Activated CD4-positive, alpha-beta T cell treated with anti-CD3 and anti-CD28 coated beads for 36 hours (primary cell): ENCODE measurements at regions of chr1 and their contacts with region 1.

Region 1: GRCh38 chr1:3618881-3619671 is 5.7 kb upstream of the TPRG1L start:
- DNase-seq: peak; percentile 85
- ATAC-seq: peak; percentile 92
- H3K4me3 Mint-ChIP-seq: peak overlapping the region; percentile 22
- H3K27ac Mint-ChIP-seq: no peak overlapping the region
- H3K4me1 Mint-ChIP-seq: peaks cover 29% of the 10 kb centered on the region
- H3K27me3 Mint-ChIP-seq: no peaks in the 10 kb centered on the region

Region 2: GRCh38 chr1:3453203-3453761 is 165.8 kb before region 1 on chr1:
- CTCF ChIA-PET with region 1: interaction called, 32 read pairs
- POLR2A ChIA-PET with region 1: no interaction called
- intact Hi-C with region 1: loop called (anchors 1 to 2 kb)
- DNase-seq: peak; percentile 87
- ATAC-seq: peak; percentile 89
- H3K4me3 Mint-ChIP-seq: no peak overlapping the region
- H3K27ac Mint-ChIP-seq: no peak overlapping the region
- H3K4me1 Mint-ChIP-seq: peaks cover 3% of the 10 kb centered on the region
- H3K27me3 Mint-ChIP-seq: peaks cover 2% of the 10 kb centered on the region

Region 3: GRCh38 chr1:3491291-3492246 is 127.5 kb before region 1 on chr1:
- CTCF ChIA-PET with region 1: interaction called, 16 read pairs
- POLR2A ChIA-PET with region 1: no interaction called
- intact Hi-C with region 1: loop called (anchors 1 kb)
- DNase-seq: peak; percentile 93
- ATAC-seq: peak; percentile 96
- H3K4me3 Mint-ChIP-seq: no peak overlapping the region
- H3K27ac Mint-ChIP-seq: no peak overlapping the region
- H3K4me1 Mint-ChIP-seq: peaks cover 3% of the 10 kb centered on the region
- H3K27me3 Mint-ChIP-seq: no peaks in the 10 kb centered on the region

Region 4: DNA sequence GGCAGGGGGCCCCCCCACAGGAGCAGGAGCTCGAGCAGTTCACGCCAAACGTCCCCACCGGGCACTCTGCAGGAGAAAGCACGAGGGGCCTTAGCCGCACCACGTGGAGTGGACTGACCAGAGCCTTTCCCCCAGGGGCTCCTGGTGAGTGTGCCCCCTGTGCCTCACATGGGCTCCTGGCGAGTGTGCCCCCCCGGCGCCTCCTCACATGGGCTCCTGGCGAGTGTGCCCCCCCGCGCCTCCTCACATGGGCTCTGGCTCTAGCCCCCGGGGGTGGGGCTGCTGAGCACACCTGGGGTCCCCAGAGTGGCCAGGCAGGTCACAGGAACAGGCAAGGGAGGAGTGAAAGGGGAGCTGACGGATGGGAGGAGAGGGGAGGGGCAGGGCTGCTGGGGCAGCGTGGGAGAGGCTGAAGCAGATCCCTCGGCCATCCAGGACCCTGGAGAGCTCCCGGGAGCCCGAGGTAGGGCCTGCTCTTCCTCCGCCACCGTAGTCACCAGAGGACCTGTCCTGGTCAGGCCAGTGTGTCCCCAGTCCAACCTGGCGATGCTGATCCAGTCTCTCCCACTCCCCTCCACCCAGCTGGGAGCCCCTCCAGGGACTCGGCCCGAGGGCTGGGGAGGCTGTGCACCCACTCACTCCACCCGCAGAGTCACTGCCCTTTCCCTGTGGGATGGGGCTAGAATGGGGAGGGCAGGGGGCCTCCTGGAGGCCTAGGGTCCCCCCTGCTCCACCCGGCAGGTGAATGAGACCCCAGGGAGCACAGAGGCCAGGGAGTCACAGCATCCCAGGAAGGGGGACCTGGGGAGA is 117.0 kb before region 1 on chr1:
- CTCF ChIA-PET with region 1: no interaction called
- POLR2A ChIA-PET with region 1: no interaction called
- intact Hi-C with region 1: no loop called
- DNase-seq: peak; percentile 40
- ATAC-seq: no peak
- H3K4me3 Mint-ChIP-seq: no peak overlapping the region
- H3K27ac Mint-ChIP-seq: no peak overlapping the region
- H3K4me1 Mint-ChIP-seq: no peaks in the 10 kb centered on the region
- H3K27me3 Mint-ChIP-seq: no peaks in the 10 kb centered on the region

Region 5: DNA sequence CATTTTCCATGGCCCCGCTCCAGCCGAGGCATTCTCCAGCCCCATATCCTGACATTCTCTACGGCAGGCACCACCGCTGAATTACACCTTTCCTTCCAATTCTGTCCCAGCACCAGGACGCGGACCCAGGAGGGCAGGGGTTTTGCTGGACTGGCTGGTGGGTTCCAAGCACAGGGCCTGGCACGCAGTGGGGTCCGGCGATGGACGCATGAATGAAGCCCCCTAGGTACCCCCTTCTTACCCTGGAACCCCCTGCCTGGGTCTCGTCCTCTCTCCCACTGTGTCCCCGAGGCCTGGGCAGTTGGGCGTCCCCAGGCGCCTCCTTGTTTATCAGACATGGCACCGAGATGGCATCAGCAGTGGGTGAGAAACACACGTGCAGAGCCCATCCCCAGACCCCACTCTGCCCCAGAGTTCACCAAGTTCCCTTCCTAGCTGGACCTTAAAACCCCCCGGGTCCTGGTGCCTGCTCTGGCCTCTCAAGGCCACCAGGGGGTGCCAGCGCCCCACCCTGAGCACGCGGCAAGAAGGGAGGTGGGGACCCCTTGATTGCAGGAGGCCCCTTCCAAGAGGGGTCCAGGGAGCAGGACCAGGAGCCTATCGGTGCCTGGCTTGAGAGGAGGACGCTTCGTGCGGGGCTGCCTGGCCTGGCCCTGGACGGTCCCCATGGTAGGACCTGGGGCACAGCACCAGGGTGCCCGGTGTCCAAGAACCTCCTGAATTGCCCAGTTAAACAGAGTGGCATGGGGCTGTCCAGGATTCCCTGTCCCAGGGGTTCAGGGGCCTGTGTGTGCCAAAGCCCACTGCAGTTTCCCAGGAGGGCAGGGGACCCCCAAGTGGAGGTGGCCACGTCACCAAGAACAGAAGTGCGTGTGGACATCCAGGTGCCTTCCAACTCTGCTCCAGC is 53.9 kb before region 1 on chr1:
- CTCF ChIA-PET with region 1: interaction called, 7 read pairs
- POLR2A ChIA-PET with region 1: no interaction called
- intact Hi-C with region 1: loop called (anchors 1 kb)
- DNase-seq: peak; percentile 55
- ATAC-seq: peak; percentile 55
- H3K4me3 Mint-ChIP-seq: no peak overlapping the region
- H3K27ac Mint-ChIP-seq: no peak overlapping the region
- H3K4me1 Mint-ChIP-seq: no peaks in the 10 kb centered on the region
- H3K27me3 Mint-ChIP-seq: no peaks in the 10 kb centered on the region

Region 6: DNA sequence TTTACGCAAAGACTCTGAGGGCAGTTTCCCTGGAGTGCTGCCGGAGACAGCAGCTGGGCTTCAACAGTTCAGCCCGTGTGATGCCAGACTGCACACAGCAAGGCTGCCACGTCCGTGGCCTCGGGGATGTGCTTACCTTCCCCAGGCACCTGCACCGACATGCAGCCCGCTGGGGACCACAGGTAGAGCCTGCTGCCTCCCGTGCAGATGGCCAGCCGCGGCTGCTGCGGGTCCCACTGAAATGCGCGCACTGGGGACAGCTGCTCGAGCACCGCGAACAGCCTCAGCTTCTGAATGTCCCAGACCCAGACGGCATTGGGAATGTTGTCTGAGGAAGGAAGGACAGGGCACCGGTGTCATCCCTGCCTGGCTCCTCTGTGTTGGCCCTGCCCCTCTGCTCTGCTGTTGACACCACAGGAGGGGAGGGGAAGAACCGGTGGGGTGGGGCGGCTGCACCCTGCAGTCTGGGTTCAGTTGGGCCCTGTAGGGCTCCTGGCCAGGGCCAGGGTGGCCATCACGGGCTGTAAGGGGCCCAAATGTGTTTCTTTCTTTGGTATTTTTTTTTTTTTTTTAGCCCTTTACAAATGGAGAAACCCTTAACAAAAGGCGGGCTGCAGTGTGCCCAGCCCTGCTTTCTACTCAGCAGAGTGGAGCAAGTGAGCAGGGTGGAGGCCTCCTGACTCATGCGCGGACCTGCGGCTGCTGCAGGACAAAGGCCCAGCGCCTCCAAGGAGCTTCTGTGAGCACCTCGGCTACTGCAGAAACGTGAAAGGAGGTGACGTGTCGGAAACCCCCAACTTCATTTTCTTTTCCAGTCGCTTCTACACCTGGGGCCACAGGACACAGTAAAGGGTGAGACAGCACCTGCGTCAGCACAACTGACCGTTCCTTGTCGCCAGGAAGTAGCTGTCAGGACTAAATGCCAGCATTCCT is 12.5 kb after region 1 on chr1:
- CTCF ChIA-PET with region 1: interaction called, 22 read pairs
- POLR2A ChIA-PET with region 1: no interaction called
- intact Hi-C with region 1: no loop called
- DNase-seq: no peak
- ATAC-seq: no peak
- H3K4me3 Mint-ChIP-seq: no peak overlapping the region
- H3K27ac Mint-ChIP-seq: no peak overlapping the region
- H3K4me1 Mint-ChIP-seq: no peaks in the 10 kb centered on the region
- H3K27me3 Mint-ChIP-seq: no peaks in the 10 kb centered on the region

Region 7: DNA sequence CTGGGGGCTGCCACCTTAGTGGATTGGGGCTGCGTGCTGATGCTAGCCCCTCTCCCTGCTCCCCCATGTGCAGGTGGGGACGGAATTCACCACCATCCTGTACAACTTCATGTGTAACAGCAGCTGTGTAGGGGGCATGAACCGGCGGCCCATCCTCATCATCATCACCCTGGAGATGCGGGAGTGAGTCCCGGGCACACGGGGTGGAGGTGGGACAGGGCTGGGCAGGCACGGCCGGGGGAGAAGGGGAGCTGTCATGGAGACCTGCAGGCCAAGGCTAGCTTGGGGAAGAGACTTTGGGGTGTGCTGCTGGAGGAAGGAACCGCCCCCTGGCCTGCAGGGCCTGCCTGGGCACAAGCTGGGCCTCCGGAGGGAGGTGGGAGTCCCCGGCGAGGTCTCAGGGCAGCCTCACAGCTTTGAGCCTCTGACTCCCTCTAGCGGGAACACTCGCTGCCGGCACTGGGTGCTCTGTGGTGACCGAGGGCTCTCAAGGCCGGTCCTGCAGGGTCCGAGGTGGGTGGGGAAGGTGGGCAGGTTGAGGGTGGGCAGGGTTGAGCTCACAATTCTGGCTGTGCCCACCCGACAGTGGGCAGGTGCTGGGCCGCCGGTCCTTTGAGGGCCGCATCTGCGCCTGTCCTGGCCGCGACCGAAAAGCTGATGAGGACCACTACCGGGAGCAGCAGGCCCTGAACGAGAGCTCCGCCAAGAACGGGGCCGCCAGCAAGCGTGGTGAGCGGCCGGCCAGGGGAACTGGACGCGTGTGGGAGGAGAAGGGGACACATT is 108.2 kb after region 1 on chr1:
- CTCF ChIA-PET with region 1: interaction called, 3 read pairs
- POLR2A ChIA-PET with region 1: no interaction called
- intact Hi-C with region 1: loop called in 1 of 2 experiments (anchors 1 kb)
- DNase-seq: peak; percentile 61
- ATAC-seq: peak; percentile 49
- H3K4me3 Mint-ChIP-seq: no peak overlapping the region
- H3K27ac Mint-ChIP-seq: no peak overlapping the region
- H3K4me1 Mint-ChIP-seq: no peaks in the 10 kb centered on the region
- H3K27me3 Mint-ChIP-seq: peaks cover 2% of the 10 kb centered on the region

Region 8: GRCh38 chr1:3968851-3969250 is 349.8 kb after region 1 on chr1:
- CTCF ChIA-PET with region 1: no interaction called
- POLR2A ChIA-PET with region 1: no interaction called
- intact Hi-C with region 1: no loop called
- DNase-seq: no peak
- ATAC-seq: no peak
- H3K4me3 Mint-ChIP-seq: no peak overlapping the region
- H3K27ac Mint-ChIP-seq: no peak overlapping the region
- H3K4me1 Mint-ChIP-seq: no peaks in the 10 kb centered on the region
- H3K27me3 Mint-ChIP-seq: peaks cover 2% of the 10 kb centered on the region